ENCODE measurements at regions of chr17 and their contacts with region 1.

Region 1: GRCh38 chr17:45640141-45640850 is 143.8 kb upstream of the CRHR1 start:
- DNase-seq: peak; percentile 70
- ATAC-seq: peak; percentile 47 to 81

Region 2: DNA sequence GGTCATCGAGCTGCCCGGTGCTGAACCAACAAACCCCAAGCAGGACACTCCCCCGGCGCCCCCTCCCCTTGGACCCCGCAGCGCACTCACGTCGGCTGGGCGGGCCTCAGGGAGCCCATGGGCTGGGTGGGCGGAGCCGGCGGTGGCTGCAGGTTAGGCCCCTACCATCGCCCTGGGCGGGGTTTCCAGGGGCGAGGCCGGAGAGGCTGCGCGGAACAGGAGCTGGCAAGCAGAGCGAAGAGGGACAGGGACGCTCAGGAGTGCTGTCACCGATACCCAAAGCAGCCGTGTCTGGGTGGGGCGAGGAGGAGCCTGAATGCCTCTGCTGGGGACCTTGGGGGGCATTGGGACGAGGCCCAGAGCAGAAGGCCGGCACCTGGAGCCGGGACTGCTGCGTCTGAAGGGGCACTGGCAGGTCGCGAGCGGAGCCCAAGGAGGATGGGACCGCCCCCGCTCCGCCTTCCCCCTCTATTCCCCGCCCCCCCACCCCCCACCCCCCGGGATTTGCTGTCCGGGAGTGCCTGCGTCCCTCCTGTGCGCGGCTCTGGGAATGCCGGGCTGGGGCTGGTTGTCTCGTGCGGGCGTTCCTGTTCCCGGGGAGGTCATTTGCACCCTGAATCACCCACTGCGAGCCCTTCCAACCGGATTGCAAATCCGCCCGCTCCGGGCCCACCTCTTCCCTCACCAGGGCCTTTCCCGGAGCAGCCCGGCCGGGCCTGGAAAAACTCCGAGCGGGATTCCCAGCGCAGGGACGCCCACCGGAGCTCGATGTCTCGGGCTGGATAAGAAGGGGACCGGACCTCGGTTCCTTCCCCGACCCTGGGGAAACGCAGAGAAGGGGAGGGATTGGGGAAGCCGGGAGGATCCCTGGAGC is 208.5 kb before region 1 on chr17:
- intact Hi-C with region 1: no loop called
- DNase-seq: peak; percentile 78
- ATAC-seq: peak; percentile 38 to 59

Region 3: GRCh38 chr17:45759761-45760160 is 119.5 kb after region 1 on chr17:
- intact Hi-C with region 1: no loop called
- DNase-seq: no peak
- ATAC-seq: no peak

Region 4: DNA sequence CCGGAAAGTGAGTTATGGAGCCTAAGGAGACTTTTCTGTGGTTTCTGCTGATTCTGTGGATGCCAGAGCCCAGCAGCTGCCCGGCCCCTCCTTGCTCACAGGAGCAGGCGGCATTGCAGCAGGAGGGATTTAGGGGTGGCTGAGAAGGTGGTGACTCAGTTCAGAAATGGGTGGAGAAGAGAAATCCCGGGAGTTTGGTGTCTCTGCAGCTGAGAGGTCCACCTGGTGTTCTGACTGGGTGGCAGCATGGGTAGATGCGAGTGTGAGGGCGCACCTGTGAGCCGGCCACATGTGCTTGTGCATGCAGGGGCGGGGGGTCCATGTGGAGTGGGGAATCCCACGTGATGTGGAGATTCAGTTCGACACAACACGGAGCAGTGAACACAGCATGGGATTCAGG is 188.3 kb after region 1 on chr17:
- intact Hi-C with region 1: loop called (anchors 1 to 5 kb)
- DNase-seq: no peak
- ATAC-seq: no peak

Region 5: DNA sequence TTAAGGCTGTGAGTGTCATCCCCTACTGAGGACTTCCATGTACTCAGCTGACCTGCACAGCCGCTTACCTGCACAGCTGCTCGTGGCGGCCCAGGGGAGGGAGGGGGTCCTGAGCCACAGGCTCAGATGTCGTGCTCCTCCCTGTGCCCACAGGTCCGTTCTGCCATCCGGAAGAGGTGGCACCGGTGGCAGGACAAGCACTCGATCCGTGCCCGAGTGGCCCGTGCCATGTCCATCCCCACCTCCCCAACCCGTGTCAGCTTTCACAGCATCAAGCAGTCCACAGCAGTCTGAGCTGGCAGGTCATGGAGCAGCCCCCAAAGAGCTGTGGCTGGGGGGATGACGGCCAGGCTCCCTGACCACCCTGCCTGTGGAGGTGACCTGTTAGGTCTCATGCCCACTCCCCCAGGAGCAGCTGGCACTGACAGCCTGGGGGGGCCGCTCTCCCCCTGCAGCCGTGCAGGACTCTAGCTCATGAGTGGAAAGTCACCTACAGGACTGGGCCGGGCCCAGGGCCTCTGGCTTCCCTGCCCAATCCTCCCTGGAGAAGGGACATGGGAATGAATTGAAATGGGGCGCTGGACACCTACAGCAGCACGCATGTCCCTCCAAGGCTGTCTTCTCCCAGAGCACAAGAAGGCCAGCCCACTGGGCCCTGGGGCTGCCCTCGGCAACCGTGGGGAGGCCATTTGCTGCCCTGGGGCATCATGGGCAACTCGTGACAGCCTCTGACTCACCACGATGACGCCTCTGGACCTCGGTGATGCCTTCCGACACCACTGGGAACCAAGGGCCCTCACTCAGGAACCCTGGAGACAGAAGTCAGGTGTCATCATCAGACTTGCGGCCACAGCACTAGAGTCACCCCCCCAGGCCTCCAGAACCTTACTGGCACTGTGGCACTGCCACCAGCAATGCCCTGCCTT is 194.4 kb after region 1 on chr17:
- intact Hi-C with region 1: loop called (anchors 1 to 5 kb)
- DNase-seq: no peak
- ATAC-seq: no peak

Region 6: GRCh38 chr17:45852535-45853297 is 212.4 kb after region 1 on chr17:
- intact Hi-C with region 1: loop called in 1 of 2 experiments (anchors 5 kb)
- DNase-seq: peak; percentile 63
- ATAC-seq: no peak

Measured in left cardiac atrium (tissue), 4 donors.